HCT116 (cell line): ENCODE measurements at regions of chr12 and their contacts with region 1.

Region 1: DNA sequence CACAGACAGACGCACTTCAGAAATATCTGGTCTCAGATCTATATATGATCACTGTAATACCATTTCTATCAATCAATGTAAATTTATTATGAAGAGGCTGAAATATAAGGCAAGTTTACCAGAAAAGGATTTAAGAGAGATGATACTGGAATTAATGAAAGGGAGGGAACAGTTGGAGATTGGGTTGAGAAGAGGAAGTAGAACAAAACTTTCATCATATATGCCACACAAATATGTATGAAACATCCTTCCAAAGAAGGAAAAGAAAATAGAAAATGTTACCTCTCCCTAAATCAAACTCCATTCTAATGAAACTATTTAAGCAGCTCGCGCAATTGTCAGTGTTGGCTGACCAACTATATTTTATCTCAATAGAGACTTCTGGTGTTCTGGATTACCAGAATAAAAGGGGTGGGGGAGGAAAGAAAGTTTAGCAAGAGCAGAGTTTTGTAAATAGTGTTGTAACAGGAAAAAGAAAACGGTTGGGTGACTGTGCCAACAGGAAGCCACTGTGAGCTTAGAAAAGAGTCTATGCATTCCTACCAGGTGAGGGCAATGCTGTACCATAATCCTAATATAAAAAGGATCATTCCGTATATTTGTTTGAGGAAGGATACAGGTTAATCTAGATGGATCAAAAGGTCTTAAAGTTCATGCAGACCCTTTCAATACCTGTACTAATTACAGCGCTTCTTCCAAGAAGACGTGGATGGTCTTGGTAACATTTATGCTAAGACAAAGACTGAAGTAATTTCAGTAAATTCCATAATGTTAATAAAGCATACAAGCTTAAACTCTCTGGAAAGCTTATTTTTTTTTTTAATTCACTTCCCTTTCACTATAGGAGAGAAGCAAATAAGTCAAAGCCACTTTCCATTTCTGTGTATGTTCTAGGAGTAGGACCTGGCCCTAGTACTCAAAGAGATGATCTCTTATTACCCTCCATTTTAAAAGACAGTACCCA is 14.5 kb upstream of the LLPH start:
- DNase-seq: peak; percentile 52
- ATAC-seq: peak; percentile 82
- H3K4me3 ChIP-seq: no peak overlapping the region
- H3K27ac ChIP-seq: no peak overlapping the region
- H3K4me1 ChIP-seq: peaks cover 0 to 8% of the 10 kb centered on the region in 2 experiments; a peak in 2 of 4 replicates
- H3K27me3 ChIP-seq: no peaks in the 10 kb centered on the region
- CTCF ChIP-seq: peak; percentile 66 to 92 (median 81)
- POLR2A ChIP-seq: no peak
- RAD21 ChIP-seq: peak; percentile 79

Region 2: GRCh38 chr12:66130277-66131066 is 14.6 kb before region 1 on chr12 and contains the start of gene LLPH:
- CTCF ChIA-PET with region 1: interaction called, 18 read pairs
- POLR2A ChIA-PET with region 1: interaction called, 12 read pairs
- RAD21 ChIA-PET with region 1: interaction called in 1 of 2 experiments, 6 read pairs
- intact Hi-C with region 1: no loop called
- DNase-seq: peak; percentile 94
- ATAC-seq: peak; percentile 90
- H3K4me3 ChIP-seq: peak within 1 kb of the TSS; percentile 59 to 74
- H3K27ac ChIP-seq: peak within 1 kb of the TSS; percentile 65
- H3K4me1 ChIP-seq: peaks cover 15 to 29% of the 10 kb centered on the region in 2 experiments
- H3K27me3 ChIP-seq: no peaks in the 10 kb centered on the region
- CTCF ChIP-seq: no peak
- POLR2A ChIP-seq: peak; percentile 89
- RAD21 ChIP-seq: no peak
- total RNA-seq, gene LLPH: 45.6 TPM

Region 3: DNA sequence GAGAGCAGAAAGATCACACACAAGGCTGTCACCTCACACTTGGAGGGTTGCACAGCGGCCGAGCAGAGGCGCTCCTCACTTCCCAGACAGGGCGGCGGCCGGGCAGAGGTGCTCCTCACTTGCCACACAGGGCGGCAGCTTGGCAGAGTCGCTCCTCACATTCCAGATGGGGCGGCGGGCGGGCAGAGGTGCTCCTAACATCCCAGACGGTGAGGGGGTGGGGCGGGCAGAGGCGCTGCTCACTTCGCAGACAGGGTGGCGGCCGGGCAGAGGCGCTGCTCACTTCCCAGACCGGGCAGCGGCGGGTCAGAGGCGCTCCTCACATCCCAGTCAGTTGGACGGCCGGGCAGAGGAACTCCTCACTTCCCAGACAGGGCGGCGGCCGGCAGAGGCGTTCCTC is 15.6 kb after region 1 on chr12:
- CTCF ChIA-PET with region 1: interaction called, 16 read pairs
- POLR2A ChIA-PET with region 1: no interaction called
- RAD21 ChIA-PET with region 1: interaction called in 1 of 2 experiments, 3 read pairs
- intact Hi-C with region 1: no loop called
- DNase-seq: no peak
- ATAC-seq: no peak
- H3K4me3 ChIP-seq: no peak overlapping the region
- H3K27ac ChIP-seq: no peak overlapping the region
- H3K4me1 ChIP-seq: peaks cover 0 to 7% of the 10 kb centered on the region in 2 experiments; a peak in 1 of 4 replicates
- H3K27me3 ChIP-seq: no peaks in the 10 kb centered on the region
- CTCF ChIP-seq: no peak
- POLR2A ChIP-seq: no peak
- RAD21 ChIP-seq: no peak

Region 4: DNA sequence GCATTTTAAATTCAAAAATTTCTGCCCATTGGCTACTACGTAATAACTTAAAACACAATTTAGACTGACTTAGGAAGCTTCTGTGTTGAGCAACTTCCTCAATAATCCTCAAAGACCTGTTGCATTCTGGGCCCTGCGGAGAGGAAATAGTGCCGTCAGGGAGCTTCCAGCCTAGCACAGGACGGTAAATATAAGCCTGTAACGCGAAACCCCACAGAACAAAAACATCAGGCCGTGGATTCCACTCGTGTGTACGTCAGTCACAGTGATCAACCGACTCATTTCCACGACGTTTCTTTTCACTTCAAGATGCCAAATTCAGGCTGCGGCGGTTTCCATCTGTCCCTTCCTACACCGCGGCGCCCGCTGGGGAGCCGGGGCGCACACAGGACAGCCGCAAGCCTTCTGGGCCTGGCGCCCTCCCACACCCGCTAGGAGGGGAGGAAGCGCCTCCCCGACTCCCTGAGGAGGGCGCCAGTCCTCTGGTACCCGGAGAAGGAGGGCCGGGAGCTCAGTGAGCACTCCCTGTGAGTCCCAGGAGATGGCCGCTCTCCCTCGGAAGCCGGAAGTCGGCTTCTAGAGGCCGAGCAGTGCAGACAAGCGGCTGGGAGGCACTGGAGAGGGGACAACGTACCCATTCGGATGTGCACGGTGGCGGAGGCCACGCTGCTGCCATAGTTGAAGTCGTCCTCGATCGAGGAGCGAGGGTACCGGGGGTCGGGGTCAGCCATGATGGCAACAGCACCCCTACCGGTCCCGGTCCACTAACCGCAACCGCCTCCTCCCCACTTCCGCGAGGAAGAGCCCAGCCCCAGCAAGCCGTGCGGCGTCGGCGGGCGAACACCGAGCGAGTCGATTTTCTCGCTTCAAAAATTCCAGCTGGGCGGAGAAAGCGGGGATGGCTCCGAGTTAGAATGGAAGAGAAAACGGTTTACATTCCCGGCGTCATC is 24.4 kb after region 1 on chr12 and contains the start of gene TMBIM4:
- CTCF ChIA-PET with region 1: interaction called, 15 read pairs
- POLR2A ChIA-PET with region 1: no interaction called
- RAD21 ChIA-PET with region 1: interaction called in 1 of 2 experiments, 4 read pairs
- intact Hi-C with region 1: no loop called
- DNase-seq: peak; percentile 91
- ATAC-seq: peak; percentile 96
- H3K4me3 ChIP-seq: peak within 1 kb of the TSS; percentile 62 to 67
- H3K27ac ChIP-seq: peak within 1 kb of the TSS; percentile 98
- H3K4me1 ChIP-seq: peaks cover 4 to 19% of the 10 kb centered on the region in 2 experiments
- H3K27me3 ChIP-seq: no peaks in the 10 kb centered on the region
- CTCF ChIP-seq: peak; percentile 35 to 60 (median 57); a peak in 3 of 6 replicates
- POLR2A ChIP-seq: peak; percentile 81
- RAD21 ChIP-seq: peak; percentile 41
- total RNA-seq, gene TMBIM4: 51.1 TPM

Region 5: GRCh38 chr12:66235626-66236281 is 90.7 kb after region 1 on chr12:
- CTCF ChIA-PET with region 1: interaction called, 11 read pairs
- POLR2A ChIA-PET with region 1: no interaction called
- RAD21 ChIA-PET with region 1: no interaction called
- intact Hi-C with region 1: loop called (anchors 5 kb)
- DNase-seq: no peak
- ATAC-seq: no peak
- H3K4me3 ChIP-seq: peak overlapping the region; percentile 41 to 59
- H3K27ac ChIP-seq: no peak overlapping the region
- H3K4me1 ChIP-seq: peaks cover 6 to 17% of the 10 kb centered on the region in 2 experiments; a peak in 3 of 4 replicates
- H3K27me3 ChIP-seq: no peaks in the 10 kb centered on the region; the same call in 1 of the 2 replicates
- CTCF ChIP-seq: peak in 1 of 3 experiments; percentile 16; a peak in 2 of 6 replicates
- POLR2A ChIP-seq: no peak
- RAD21 ChIP-seq: no peak

Region 6: DNA sequence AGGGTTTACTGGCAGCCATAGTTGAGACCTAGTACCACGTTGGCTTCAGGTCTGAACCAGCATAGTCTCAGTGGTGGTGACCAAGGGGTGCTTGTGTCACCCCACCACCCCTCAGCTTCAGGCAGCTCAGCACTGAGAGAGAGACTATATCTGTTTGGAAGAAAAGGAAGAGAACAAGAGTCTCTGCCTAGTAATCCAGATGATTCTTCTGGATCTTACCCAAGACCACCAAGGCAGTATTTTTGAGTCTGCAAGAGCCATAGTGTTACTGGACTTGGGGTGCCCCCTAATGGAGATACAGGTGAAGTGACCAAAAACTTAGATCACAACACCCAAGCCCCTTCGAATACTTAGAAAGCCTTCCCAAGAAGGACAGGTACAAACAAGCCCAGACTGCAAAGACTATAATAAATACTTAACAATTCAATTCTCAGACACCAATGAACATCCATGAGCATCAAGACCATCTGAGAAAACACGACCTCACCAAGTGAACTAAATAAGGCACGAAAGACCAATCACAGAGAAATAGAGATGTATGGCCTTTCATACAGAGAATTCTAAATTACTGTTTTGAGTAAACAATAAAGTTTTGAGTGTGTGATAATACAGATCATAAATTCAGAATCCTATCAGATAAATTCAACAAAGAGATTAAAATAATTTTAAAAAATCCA is 264.3 kb after region 1 on chr12:
- CTCF ChIA-PET with region 1: interaction called, 5 read pairs
- POLR2A ChIA-PET with region 1: no interaction called
- RAD21 ChIA-PET with region 1: no interaction called
- intact Hi-C with region 1: loop called (anchors 1 kb)
- DNase-seq: peak; percentile 57
- ATAC-seq: peak; percentile 92
- H3K4me3 ChIP-seq: no peak overlapping the region
- H3K27ac ChIP-seq: no peak overlapping the region
- H3K4me1 ChIP-seq: peaks cover 0 to 4% of the 10 kb centered on the region in 2 experiments; a peak in 1 of 4 replicates
- H3K27me3 ChIP-seq: no peaks in the 10 kb centered on the region
- CTCF ChIP-seq: peak; percentile 85 to 92 (median 86)
- POLR2A ChIP-seq: no peak
- RAD21 ChIP-seq: peak; percentile 88

Region 7: DNA sequence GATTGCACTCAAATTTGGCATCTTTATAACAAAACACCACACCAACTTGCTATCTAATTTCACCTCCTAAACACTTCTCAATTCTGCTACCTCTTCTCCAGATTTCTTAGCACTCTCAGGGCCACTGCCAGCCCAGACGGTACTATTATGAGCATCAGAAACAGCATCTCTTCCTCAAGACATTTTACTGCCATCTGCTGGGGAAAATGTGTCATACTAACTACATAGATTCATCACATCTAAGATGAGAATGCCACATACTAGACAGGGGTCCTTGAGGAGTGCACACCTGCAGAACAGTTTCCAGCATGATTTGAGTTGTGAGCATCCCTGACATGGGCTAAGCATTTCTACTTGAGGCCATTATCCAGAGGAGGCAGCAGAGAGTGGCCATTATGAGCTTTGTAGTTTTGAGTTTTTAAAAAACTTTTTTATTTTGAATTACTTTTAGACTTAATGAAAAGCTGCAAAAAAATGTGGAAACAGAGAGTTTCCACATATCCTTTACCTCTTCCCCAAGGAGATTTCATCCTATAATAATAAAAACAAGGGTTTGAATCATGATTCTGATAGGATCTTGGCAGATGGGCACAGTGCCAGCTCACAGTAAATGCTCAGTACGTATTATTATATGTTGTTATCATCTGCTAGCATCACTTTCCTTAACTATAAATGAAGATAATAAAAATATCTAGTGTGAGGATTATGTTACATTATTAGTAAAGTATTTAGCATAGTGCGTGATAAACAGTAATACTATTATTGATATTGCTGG is 549.0 kb after region 1 on chr12:
- CTCF ChIA-PET with region 1: no interaction called
- POLR2A ChIA-PET with region 1: no interaction called
- RAD21 ChIA-PET with region 1: no interaction called
- intact Hi-C with region 1: loop called (anchors 5 kb)
- DNase-seq: peak; percentile 52
- ATAC-seq: peak; percentile 95
- H3K4me3 ChIP-seq: no peak overlapping the region
- H3K27ac ChIP-seq: no peak overlapping the region
- H3K4me1 ChIP-seq: no peaks in the 10 kb centered on the region
- H3K27me3 ChIP-seq: peaks cover 20% of the 10 kb centered on the region; the same call in 1 of the 2 replicates
- CTCF ChIP-seq: peak; percentile 36 to 63 (median 40); a peak in 4 of 6 replicates
- POLR2A ChIP-seq: no peak
- RAD21 ChIP-seq: peak; percentile 60